Posterior vena cava (tissue), 2 donors: ENCODE measurements at regions of chr9 and their contacts with region 1.

Region 1: DNA sequence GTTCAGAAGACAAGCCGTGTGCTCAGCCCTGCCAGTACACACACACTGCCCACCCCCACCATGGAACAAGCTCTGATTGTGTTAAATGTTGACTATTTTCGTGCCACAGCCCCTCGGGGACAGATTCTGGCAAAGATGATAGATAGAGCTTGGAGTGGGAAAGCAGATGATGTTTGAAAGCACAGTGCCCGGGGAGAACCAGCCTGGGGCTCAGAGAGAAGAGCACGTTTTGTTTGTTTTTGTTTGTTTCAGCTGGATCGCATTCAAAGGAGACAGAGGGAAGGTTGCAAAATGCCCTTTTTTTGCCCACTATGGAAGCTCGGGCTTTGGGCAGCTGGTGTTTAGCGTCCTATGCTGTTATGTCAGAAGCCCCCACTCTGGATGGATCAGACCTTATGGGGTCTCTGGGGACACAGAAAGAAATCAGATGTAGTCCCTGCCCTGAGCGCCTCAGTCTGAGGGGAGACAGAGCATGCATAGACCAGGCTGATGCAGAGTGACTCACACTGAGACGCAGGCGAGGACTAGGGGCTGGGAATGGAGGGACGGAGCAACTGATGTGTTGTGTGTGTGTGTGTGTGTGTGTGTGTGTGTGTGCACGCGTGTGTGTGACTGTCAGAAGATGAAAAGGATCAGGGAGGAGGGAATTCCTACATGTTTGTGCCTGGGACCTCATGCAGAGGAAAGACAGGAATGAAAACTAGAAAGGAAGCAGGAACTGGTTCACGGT is 229.7 kb downstream of the MELK start:
- DNase-seq: no peak

Region 2: DNA sequence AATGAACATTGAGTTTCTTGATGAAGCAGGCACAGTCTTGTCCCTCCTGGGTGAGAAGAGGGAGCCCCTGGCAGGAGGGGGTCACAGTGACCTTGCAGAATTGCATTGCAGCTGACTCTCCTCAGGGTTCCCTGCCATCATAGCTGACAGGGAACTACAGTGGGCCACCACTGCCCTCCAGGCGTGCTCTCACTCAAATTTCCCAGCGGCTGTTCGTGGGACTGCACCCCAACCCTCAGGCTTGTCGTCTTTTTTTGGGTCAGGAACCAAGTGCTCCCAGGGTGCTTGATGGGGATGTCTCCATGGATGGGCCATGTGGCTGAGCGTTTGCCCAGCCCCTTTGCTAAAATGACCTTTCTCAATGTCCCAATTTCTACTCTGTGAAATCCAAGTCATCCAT is 13.8 kb before region 1 on chr9:
- intact Hi-C with region 1: loop called in 1 of 2 experiments (anchors 1 kb)
- DNase-seq: no peak

Region 3: GRCh38 chr9:36862206-36863145 is 60.1 kb after region 1 on chr9:
- intact Hi-C with region 1: loop called in 1 of 2 experiments (anchors 10 kb)
- DNase-seq: peak; percentile 78

Region 4: DNA sequence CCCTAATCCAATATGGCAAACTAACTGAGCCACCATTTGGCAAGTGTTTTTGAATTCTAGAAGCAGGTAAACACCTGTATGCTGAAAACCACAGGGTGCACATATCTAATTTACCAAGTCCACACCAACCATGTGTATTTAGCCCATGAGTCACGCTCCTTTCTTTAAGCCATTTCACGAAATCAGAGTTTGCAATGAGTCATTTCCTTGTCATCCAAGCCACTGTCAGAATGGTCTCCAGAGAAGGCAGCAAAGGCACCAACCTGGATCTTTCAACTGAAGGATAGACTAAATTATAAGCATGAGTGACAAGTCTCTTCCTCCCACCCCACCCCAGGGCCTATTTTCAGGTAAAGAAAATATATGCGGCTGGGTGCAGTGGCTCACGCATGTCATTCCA is 121.7 kb after region 1 on chr9:
- intact Hi-C with region 1: no loop called
- DNase-seq: no peak

Region 5: GRCh38 chr9:36935768-36936497 is 133.6 kb after region 1 on chr9:
- intact Hi-C with region 1: no loop called
- DNase-seq: no peak

Region 6: DNA sequence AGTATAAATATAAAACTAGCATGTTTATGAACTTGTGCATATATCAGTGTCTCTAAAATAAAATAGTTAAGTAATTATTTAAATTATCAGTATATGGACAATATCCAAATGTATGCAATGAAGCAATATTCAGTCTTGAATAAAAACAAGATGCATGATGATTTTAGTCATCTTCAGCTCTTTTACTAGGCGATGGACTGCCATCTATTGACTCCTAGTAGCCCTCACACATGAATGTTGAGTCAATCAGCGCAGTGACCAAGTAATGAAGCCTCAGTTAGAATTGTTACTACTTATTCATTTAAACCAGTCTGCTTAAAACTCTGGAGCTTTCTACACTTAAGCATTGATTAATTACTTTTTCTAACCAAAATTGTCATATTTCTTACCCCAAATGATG is 527.2 kb after region 1 on chr9:
- intact Hi-C with region 1: no loop called
- DNase-seq: no peak